Mammary epithelial cell (primary cell): ENCODE measurements at regions of chr11 and their contacts with region 1.

Region 1: GRCh38 chr11:16902781-16903378 is 111.3 kb downstream of the PLEKHA7 start:
- DNase-seq: peak; percentile 35
- H3K4me3 ChIP-seq: no peak overlapping the region
- H3K27ac ChIP-seq: peak overlapping the region; percentile 92
- H3K4me1 ChIP-seq: peaks cover 41% of the 10 kb centered on the region
- H3K27me3 ChIP-seq: no peaks in the 10 kb centered on the region
- CTCF ChIP-seq: no peak

Region 2: DNA sequence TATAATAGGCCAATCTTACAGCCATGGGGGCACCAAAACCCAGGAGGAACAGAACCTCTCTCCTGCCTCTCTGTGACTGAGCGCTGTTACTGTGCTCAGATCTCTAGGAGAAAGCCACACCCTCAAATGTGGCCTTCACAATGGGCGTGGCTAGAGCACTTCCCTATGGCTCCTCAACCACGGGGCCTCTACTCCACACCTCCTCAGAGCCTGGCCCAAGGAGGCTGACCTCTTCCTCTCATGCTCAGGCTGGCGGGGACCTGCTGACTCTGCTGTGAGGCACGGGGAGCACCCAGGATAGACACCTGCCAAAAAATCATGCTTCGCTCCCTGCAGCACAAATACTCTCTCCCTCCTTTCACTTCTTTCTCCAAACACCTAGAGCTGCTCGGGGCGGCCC is 123.4 kb before region 1 on chr11:
- CTCF ChIA-PET with region 1: no interaction called
- dilution Hi-C with region 1: no loop called
- in situ Hi-C with region 1: no loop called
- intact Hi-C with region 1: no loop called
- DNase-seq: no peak
- H3K4me3 ChIP-seq: no peak overlapping the region
- H3K27ac ChIP-seq: no peak overlapping the region
- H3K4me1 ChIP-seq: peaks cover 24% of the 10 kb centered on the region
- H3K27me3 ChIP-seq: no peaks in the 10 kb centered on the region
- CTCF ChIP-seq: no peak

Region 3: GRCh38 chr11:16791191-16791961 is 111.5 kb before region 1 on chr11:
- CTCF ChIA-PET with region 1: no interaction called
- dilution Hi-C with region 1: no loop called
- in situ Hi-C with region 1: no loop called
- intact Hi-C with region 1: no loop called
- DNase-seq: peak; percentile 87
- H3K4me3 ChIP-seq: no peak overlapping the region
- H3K27ac ChIP-seq: peak overlapping the region; percentile 98
- H3K4me1 ChIP-seq: peaks cover 57% of the 10 kb centered on the region
- H3K27me3 ChIP-seq: no peaks in the 10 kb centered on the region
- CTCF ChIP-seq: no peak

Region 4: DNA sequence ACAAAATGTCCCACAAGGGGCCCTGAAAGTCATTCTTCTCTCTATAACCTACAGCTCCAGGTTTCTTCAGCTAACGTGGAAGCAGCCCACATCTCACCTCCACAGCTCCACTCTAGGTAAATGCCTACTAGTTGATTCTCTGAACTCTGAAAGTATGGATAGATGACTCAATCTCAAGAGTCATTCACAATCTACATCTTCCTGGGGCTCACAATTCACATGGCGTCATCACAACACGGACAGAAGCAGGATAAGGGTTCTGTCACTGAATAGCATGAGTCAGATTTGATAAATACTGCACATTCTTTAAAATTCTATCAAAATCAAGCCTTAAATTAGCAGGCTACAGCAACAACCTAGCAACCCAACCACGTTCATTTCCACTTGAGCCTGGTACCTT is 15.1 kb after region 1 on chr11:
- CTCF ChIA-PET with region 1: no interaction called
- dilution Hi-C with region 1: no loop called
- in situ Hi-C with region 1: no loop called
- intact Hi-C with region 1: loop called (anchors 2 kb)
- DNase-seq: peak; percentile 58
- H3K4me3 ChIP-seq: no peak overlapping the region
- H3K27ac ChIP-seq: peak overlapping the region; percentile 58
- H3K4me1 ChIP-seq: peaks cover 26% of the 10 kb centered on the region
- H3K27me3 ChIP-seq: no peaks in the 10 kb centered on the region
- CTCF ChIP-seq: no peak

Region 5: DNA sequence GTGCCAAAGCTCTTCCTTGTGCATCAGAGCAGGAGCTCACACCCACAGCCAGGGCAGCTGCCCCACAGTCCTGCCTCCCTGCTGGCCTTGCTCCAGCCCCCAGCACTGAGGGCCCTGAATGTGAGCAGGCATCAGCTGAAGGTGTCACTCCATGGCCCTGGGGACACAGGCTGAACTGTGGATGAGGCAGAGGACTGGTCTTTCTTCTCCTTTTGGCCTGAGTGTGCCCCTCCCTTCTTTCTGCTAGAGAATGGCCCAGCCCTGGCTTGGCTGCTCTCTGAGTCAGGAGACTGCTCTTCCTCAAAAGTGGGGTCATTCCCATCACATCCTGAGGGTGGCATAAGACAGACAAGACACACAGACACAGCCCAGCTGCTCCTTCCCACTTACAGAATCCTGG is 660.4 kb after region 1 on chr11:
- CTCF ChIA-PET with region 1: no interaction called
- dilution Hi-C with region 1: no loop called
- in situ Hi-C with region 1: no loop called
- intact Hi-C with region 1: no loop called
- DNase-seq: peak; percentile 2
- H3K4me3 ChIP-seq: no peak overlapping the region
- H3K27ac ChIP-seq: no peak overlapping the region
- H3K4me1 ChIP-seq: no peaks in the 10 kb centered on the region
- H3K27me3 ChIP-seq: no peaks in the 10 kb centered on the region
- CTCF ChIP-seq: no peak